Left cardiac atrium (tissue), 4 donors: ENCODE measurements at regions of chr19 and their contacts with region 1.

Region 1: GRCh38 chr19:33176670-33177416 is 17.3 kb upstream of the LRP3 start:
- DNase-seq: peak; percentile 97
- ATAC-seq: peak; percentile 94 to 96

Region 2: GRCh38 chr19:32914879-32915660 is 261.8 kb before region 1 on chr19:
- intact Hi-C with region 1: no loop called
- DNase-seq: no peak
- ATAC-seq: no peak

Region 3: GRCh38 chr19:33000510-33000909 is 176.3 kb before region 1 on chr19:
- intact Hi-C with region 1: no loop called
- DNase-seq: no peak
- ATAC-seq: no peak

Region 4: DNA sequence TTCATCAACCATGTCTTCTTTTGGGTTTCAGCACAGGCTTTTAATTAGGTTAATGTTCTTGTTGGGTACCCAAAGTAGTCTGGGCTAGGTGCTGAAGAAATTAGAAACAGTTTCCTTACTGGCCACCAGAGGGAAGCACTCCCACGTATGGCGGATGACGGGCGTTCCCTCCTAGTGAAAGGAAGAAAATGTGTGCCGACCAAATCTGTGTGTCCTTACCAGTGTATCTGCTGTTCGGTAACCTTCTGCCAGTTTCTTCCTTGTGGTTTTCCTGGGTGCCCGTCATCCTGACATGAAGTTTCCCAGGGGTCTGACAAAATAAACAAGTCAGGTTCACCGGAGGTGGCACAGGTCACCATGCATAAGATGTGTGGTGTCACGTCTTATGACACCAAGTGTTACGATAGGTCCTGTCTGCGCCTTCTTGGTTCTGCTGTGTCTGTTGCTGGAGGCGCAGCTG is 50.9 kb before region 1 on chr19:
- intact Hi-C with region 1: loop called in 1 of 2 experiments (anchors 5 kb)
- DNase-seq: peak; percentile 46
- ATAC-seq: peak; percentile 77 to 88

Region 5: DNA sequence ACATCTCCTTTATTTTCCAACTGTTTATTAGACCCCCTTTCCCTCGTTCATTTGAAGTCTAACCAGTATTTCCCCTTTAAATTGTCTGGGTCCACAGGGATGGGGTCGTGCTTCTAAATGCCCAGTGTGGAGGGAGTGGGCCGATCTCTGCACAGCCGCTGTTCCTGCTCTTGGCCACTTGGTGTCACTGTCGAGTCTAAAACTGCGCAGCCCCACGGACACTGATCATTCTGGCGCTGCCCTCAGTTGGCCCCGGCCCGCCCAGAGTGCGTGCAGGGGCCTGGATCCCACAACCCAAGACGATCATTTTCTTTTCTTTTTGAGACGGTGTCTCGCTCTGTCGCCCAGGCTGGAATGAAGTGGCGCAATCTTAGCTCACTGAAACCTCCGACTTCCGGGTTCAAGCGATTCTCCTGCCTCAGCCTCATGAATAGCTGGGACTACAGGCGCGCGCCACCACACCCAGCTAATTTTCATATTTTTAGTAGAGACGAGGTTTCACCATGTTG is 32.9 kb before region 1 on chr19:
- intact Hi-C with region 1: loop called in 1 of 2 experiments (anchors 5 kb)
- DNase-seq: peak; percentile 60
- ATAC-seq: peak; percentile 95 to 98